ENCODE measurements at regions of chr1 and their contacts with region 1.

Region 1: GRCh38 chr1:178168536-178168935 is 74.6 kb downstream of the RASAL2 start:
- DNase-seq: no peak
- ATAC-seq: no peak
- H3K4me3 ChIP-seq: no peak overlapping the region
- H3K4me3 Mint-ChIP-seq: no peak overlapping the region
- H3K27ac ChIP-seq: no peak overlapping the region
- H3K27ac Mint-ChIP-seq: no peak overlapping the region
- H3K4me1 ChIP-seq: no peaks in the 10 kb centered on the region
- H3K4me1 Mint-ChIP-seq: no peaks in the 10 kb centered on the region
- H3K27me3 ChIP-seq: no peaks in the 10 kb centered on the region
- H3K27me3 Mint-ChIP-seq: peaks cover 0 to 3% of the 10 kb centered on the region in 2 donors

Region 2: GRCh38 chr1:177567407-177567806 is 601.1 kb before region 1 on chr1:
- CTCF ChIA-PET with region 1: no interaction called
- POLR2A ChIA-PET with region 1: no interaction called
- DNase-seq: no peak
- ATAC-seq: no peak
- H3K4me3 ChIP-seq: no peak overlapping the region
- H3K4me3 Mint-ChIP-seq: no peak overlapping the region
- H3K27ac ChIP-seq: no peak overlapping the region
- H3K27ac Mint-ChIP-seq: no peak overlapping the region
- H3K4me1 ChIP-seq: no peaks in the 10 kb centered on the region
- H3K4me1 Mint-ChIP-seq: no peaks in the 10 kb centered on the region
- H3K27me3 ChIP-seq: no peaks in the 10 kb centered on the region
- H3K27me3 Mint-ChIP-seq: no peaks in the 10 kb centered on the region

Region 3: GRCh38 chr1:178183796-178184195 is 15.3 kb after region 1 on chr1:
- CTCF ChIA-PET with region 1: interaction called in 1 of 2 experiments, 12 read pairs
- POLR2A ChIA-PET with region 1: no interaction called
- DNase-seq: no peak
- ATAC-seq: no peak
- H3K4me3 ChIP-seq: no peak overlapping the region
- H3K4me3 Mint-ChIP-seq: no peak overlapping the region
- H3K27ac ChIP-seq: no peak overlapping the region
- H3K27ac Mint-ChIP-seq: no peak overlapping the region
- H3K4me1 ChIP-seq: no peaks in the 10 kb centered on the region
- H3K4me1 Mint-ChIP-seq: no peaks in the 10 kb centered on the region
- H3K27me3 ChIP-seq: no peaks in the 10 kb centered on the region
- H3K27me3 Mint-ChIP-seq: no peaks in the 10 kb centered on the region

Measured in T-cell (primary cell).